ENCODE measurements at regions of chr5 and their contacts with region 1.

Region 1: DNA sequence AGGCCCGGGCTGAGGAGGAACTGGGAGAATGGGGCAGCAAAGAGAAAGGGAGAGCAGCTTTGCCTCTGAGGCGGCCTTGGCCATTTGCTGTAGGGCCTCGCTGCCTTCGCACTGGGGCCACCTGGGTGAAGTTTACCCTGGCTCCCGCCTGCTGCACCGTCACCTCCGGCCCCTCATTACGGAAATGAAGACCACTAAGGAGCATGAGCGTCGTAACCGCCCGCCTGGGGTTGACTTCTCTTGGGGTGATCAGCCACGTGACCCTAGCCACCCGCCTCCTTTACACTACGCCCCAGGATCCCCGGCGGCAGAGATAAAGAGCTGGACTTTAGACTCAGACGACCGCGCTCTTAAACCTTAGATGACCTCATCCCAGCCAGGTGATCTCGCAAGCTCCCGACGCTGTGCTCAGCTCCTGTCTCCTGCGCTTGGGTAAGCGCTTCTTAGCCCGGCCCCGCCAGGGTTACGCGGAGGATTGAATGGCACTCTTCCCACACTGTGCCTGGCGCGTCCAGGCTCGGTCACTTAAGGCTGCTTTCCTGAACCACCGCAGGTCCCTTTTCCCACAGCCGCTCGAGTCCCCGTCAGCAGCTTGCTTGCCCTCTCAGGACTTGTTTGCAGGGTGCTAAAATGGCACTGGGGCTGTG is 107.9 kb upstream of the LARP1 start:
- DNase-seq: peak; percentile 83
- ATAC-seq: peak; percentile 91
- H3K4me3 ChIP-seq: peak overlapping the region; percentile 62 to 75 (median 63)
- H3K27ac ChIP-seq: peak overlapping the region; percentile 74
- H3K4me1 ChIP-seq: peaks cover 67% of the 10 kb centered on the region
- H3K27me3 ChIP-seq: no peaks in the 10 kb centered on the region
- CTCF ChIP-seq: 0 out of 2 replicates have a peak, but pooled peaks have one; percentile 16
- EP300 ChIP-seq: peak; percentile 32 to 65; a peak in 3 of 4 replicates
- POLR2A ChIP-seq: peak in 1 of 2 experiments; percentile 80; a peak in 2 of 4 replicates
- RAD21 ChIP-seq: no peak

Region 2: GRCh38 chr5:153974131-153974812 is 673.0 kb before region 1 on chr5:
- CTCF ChIA-PET with region 1: no interaction called
- POLR2A ChIA-PET with region 1: no interaction called
- in situ Hi-C with region 1: no loop called
- intact Hi-C with region 1: loop called (anchors 2 kb)
- DNase-seq: peak; percentile 25
- ATAC-seq: peak; percentile 82
- H3K4me3 ChIP-seq: no peak overlapping the region
- H3K27ac ChIP-seq: no peak overlapping the region
- H3K4me1 ChIP-seq: no peaks in the 10 kb centered on the region
- H3K27me3 ChIP-seq: peaks cover 2 to 22% of the 10 kb centered on the region in 2 experiments; a peak in 4 of 5 replicates
- CTCF ChIP-seq: peak; percentile 77
- EP300 ChIP-seq: no peak
- POLR2A ChIP-seq: no peak
- RAD21 ChIP-seq: peak; percentile 43; the same call in 1 of the 2 replicates

Region 3: GRCh38 chr5:154683101-154683880 is 36.1 kb after region 1 on chr5:
- CTCF ChIA-PET with region 1: no interaction called
- POLR2A ChIA-PET with region 1: interaction called, 10 read pairs
- in situ Hi-C with region 1: no loop called
- intact Hi-C with region 1: no loop called
- DNase-seq: no peak
- ATAC-seq: peak; percentile 34; the same call in 2 of the 3 replicates
- H3K4me3 ChIP-seq: peak overlapping the region; percentile 59 to 67 (median 66)
- H3K27ac ChIP-seq: peak overlapping the region; percentile 74
- H3K4me1 ChIP-seq: peaks cover 55% of the 10 kb centered on the region
- H3K27me3 ChIP-seq: no peaks in the 10 kb centered on the region
- CTCF ChIP-seq: no peak
- EP300 ChIP-seq: no peak
- POLR2A ChIP-seq: no peak
- RAD21 ChIP-seq: no peak

Region 4: DNA sequence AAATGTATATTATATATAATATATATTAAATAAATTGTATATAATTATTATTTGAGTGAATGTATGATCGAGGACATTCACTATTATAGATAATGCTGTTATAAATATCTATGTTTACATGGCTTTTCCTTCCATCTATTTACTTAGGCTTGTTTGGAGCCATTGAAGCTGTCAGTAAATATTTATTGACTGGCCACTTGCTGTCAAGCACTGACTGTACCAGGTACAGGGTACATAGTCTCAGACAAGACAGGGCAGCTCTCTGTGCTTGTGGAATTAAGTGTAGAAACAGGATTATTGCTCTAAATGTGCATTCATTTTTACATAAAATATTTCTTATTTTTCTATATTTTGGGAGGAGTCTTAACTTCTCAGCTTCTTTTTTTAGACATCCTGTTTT is 186.8 kb after region 1 on chr5:
- CTCF ChIA-PET with region 1: no interaction called
- POLR2A ChIA-PET with region 1: no interaction called
- in situ Hi-C with region 1: no loop called
- intact Hi-C with region 1: no loop called
- DNase-seq: peak; percentile 68
- ATAC-seq: peak; percentile 68
- H3K4me3 ChIP-seq: peak overlapping the region in 2 of 3 experiments; percentile 22 to 49; a peak in 2 of 6 replicates
- H3K27ac ChIP-seq: peak overlapping the region; percentile 48
- H3K4me1 ChIP-seq: peaks cover 85% of the 10 kb centered on the region
- H3K27me3 ChIP-seq: no peaks in the 10 kb centered on the region
- CTCF ChIP-seq: no peak
- EP300 ChIP-seq: peak in 1 of 2 experiments; percentile 87; a peak in 2 of 4 replicates
- POLR2A ChIP-seq: no peak
- RAD21 ChIP-seq: no peak

Region 5: GRCh38 chr5:154857530-154858296 is 210.5 kb after region 1 on chr5:
- CTCF ChIA-PET with region 1: no interaction called
- POLR2A ChIA-PET with region 1: interaction called, 12 read pairs
- in situ Hi-C with region 1: no loop called
- intact Hi-C with region 1: loop called (anchors 5 kb)
- DNase-seq: peak; percentile 93
- ATAC-seq: peak; percentile 89
- H3K4me3 ChIP-seq: peak overlapping the region; percentile 78 to 93 (median 85)
- H3K27ac ChIP-seq: peak overlapping the region; percentile 99
- H3K4me1 ChIP-seq: peaks cover 34% of the 10 kb centered on the region
- H3K27me3 ChIP-seq: peaks cover 0 to 4% of the 10 kb centered on the region in 2 experiments; a peak in 1 of 5 replicates
- CTCF ChIP-seq: peak; percentile 56
- EP300 ChIP-seq: no peak; a peak in 1 of 4 replicates
- POLR2A ChIP-seq: peak in 1 of 2 experiments; percentile 72
- RAD21 ChIP-seq: peak; percentile 23; the same call in 1 of the 2 replicates

Region 6: GRCh38 chr5:154940772-154941620 is 293.8 kb after region 1 on chr5 and contains the start of gene MRPL22:
- CTCF ChIA-PET with region 1: no interaction called
- POLR2A ChIA-PET with region 1: interaction called, 4 read pairs
- in situ Hi-C with region 1: no loop called
- intact Hi-C with region 1: loop called (anchors 1 kb)
- DNase-seq: peak; percentile 87
- ATAC-seq: peak; percentile 68
- H3K4me3 ChIP-seq: peak within 1 kb of the TSS; percentile 80 to 83 (median 82)
- H3K27ac ChIP-seq: peak within 1 kb of the TSS; percentile 78
- H3K4me1 ChIP-seq: peaks cover 51% of the 10 kb centered on the region
- H3K27me3 ChIP-seq: no peaks in the 10 kb centered on the region; a peak in 1 of 5 replicates
- CTCF ChIP-seq: no peak
- EP300 ChIP-seq: no peak
- POLR2A ChIP-seq: peak; percentile 83 to 84
- RAD21 ChIP-seq: no peak
- total RNA-seq, gene MRPL22: 84.8 and 118 TPM in 2 replicates